H1 (cell line): ENCODE measurements at regions of chr10 and their contacts with region 1.

Region 1: DNA sequence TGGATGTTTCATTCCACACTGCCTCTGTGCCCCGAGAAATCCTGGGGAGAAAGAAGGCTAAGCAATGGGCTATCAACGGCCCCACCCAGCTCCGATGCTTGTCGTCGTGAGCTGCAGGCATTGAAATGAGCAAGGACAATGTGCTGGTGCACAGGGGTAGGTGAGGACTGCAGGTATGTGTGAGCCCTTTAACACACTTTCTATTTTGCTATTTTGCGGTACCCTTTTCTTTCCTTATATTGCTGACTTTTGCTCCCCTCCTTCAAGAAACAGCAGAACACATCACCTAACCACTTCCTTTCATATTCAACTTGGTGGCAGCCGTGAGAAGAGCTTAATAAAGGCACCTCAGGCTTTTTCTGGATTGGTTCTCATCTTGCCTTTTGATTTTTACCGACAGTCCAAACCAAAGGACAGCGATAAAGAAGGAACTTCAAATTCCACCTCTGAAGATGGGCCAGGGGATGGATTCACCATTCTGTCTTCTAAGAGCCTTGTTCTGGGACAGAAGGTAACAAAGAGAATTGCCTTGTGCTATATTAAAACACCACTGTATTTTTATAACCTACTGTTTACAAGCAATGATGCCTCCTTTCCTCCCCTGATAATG is 39.2 kb downstream of the AIFM2 start:
- DNase-seq: no peak
- H3K4me3 ChIP-seq: no peak overlapping the region
- H3K27ac ChIP-seq: no peak overlapping the region
- H3K4me1 ChIP-seq: no peaks in the 10 kb centered on the region; a peak in 1 of 7 replicates
- H3K27me3 ChIP-seq: no peaks in the 10 kb centered on the region
- CTCF ChIP-seq: no peak
- EP300 ChIP-seq: no peak
- POLR2A ChIP-seq: no peak
- RAD21 ChIP-seq: no peak

Region 2: GRCh38 chr10:70106958-70107791 is 13.7 kb after region 1 on chr10:
- CTCF ChIA-PET with region 1: interaction called, 90 read pairs
- POLR2A ChIA-PET with region 1: no interaction called
- DNase-seq: peak; percentile 29 to 92
- H3K4me3 ChIP-seq: no peak overlapping the region
- H3K27ac ChIP-seq: no peak overlapping the region
- H3K4me1 ChIP-seq: peaks cover 0 to 2% (median 2%) of the 10 kb centered on the region in 4 experiments; a peak in 2 of 7 replicates
- H3K27me3 ChIP-seq: no peaks in the 10 kb centered on the region
- CTCF ChIP-seq: peak; percentile 87 to 99 (median 97)
- EP300 ChIP-seq: no peak
- POLR2A ChIP-seq: no peak
- RAD21 ChIP-seq: peak; percentile 61 to 71